PC-3 (cell line): ENCODE measurements at regions of chr3 and their contacts with region 1.

Region 1: DNA sequence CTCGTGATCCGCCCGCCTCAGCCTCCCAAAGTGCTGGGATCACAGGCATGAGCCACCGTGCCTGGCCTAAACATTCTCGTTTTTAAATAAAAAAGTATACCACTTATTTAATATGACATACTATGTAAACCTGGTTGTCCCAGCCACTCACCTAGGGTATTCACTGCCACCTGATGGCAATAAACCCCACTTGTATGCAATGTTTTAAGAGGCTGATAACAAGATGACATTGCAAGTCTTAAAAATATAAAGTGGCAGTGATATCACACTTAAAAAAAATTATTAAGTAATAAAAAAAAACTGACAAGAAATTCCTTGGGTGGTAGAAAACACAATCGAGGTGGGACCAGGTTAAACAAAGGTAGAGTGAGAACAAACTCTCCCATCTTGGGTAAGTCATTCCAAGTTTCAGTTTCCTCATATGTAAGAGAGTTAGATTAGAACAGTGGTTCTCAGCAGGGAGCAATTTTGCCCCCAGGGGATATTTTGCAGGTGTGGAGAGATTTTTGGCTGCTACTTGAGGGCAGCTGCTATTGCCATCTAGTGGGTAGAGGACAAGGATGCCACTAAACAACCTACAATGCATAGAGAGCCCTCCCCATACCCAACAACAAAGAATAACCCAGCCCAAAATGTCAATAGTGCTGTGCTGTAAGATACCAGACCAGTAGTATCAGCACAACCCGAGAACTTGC is 14.5 kb downstream of the ARF4 start:
- DNase-seq: peak; percentile 83
- ATAC-seq: peak; percentile 64
- H3K4me3 ChIP-seq: no peak overlapping the region
- H3K27ac ChIP-seq: 0 out of 2 replicates have a peak overlapping the region, but pooled peaks have one; percentile 1
- H3K4me1 ChIP-seq: peaks cover 23% of the 10 kb centered on the region
- H3K27me3 ChIP-seq: no peaks in the 10 kb centered on the region
- CTCF ChIP-seq: peak; percentile 73

Region 2: GRCh38 chr3:57555738-57556458 is 26.7 kb before region 1 on chr3 and contains the start of gene PDE12:
- CTCF ChIA-PET with region 1: no interaction called
- POLR2A ChIA-PET with region 1: no interaction called
- intact Hi-C with region 1: no loop called
- DNase-seq: peak; percentile 89
- ATAC-seq: peak; percentile 76
- H3K4me3 ChIP-seq: peak within 1 kb of the TSS; percentile 85
- H3K27ac ChIP-seq: peak within 1 kb of the TSS; percentile 75
- H3K4me1 ChIP-seq: peaks cover 32% of the 10 kb centered on the region
- H3K27me3 ChIP-seq: no peaks in the 10 kb centered on the region
- CTCF ChIP-seq: no peak
- total RNA-seq, gene PDE12: 25.3 and 32.3 TPM in 2 replicates

Region 3: GRCh38 chr3:57597122-57597923 is 14.7 kb after region 1 on chr3 and contains the start of gene ARF4:
- CTCF ChIA-PET with region 1: no interaction called
- POLR2A ChIA-PET with region 1: interaction called, 4 read pairs
- intact Hi-C with region 1: loop called (anchors 2 kb)
- DNase-seq: peak; percentile 99
- ATAC-seq: peak; percentile 87
- H3K4me3 ChIP-seq: peak within 1 kb of the TSS; percentile 99
- H3K27ac ChIP-seq: peak within 1 kb of the TSS; percentile 93
- H3K4me1 ChIP-seq: peaks cover 28% of the 10 kb centered on the region
- H3K27me3 ChIP-seq: no peaks in the 10 kb centered on the region
- CTCF ChIP-seq: 0 out of 2 replicates have a peak, but pooled peaks have one; percentile 24
- total RNA-seq, gene ARF4: 130 and 135 TPM in 2 replicates